ENCODE measurements at regions of chr17 and their contacts with region 1.

Region 1: DNA sequence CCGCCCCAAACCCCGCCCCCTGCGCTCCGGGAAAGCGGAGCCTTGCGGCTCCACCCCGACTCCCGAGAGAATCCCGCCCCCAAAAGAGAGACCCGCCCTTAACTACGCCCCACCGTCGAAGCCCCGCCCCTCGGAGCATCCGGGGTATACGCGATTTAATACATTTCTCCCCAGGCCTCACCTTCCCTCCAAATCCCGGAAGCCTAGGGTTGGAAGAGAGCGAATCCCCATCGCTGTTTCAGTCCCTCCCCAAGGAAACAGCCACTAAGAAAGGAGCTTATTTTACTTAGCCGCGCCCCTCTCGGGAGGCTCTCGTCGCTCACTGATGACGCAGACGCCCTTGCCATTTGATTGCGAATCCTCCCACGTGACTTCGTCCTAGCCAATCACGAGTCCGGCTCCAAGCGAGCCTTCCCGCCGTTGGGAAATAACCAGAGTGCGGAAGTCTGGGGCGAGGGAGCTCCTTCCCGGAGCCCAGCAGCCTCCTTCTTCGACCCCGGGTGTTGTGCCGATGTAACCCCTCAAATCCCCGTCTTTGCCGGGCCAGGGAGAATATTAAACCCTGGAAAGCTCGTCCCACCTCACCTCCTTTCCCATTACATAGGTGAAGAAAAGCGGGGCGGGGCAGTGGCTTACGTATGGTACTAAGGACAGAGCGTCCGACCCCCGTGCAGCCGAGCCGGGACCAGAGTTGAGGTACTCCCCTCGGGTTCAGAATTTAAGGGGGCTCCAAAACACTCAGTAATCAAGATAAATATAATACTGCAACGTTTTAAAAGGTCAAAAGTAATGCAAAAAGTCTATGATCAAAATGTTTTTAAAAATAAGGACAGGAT is 462 bp upstream of the FDXR start:
- DNase-seq: peak; percentile 99 to 100
- H3K4me3 ChIP-seq: peak overlapping the region; percentile 83
- H3K4me3 Mint-ChIP-seq: peak overlapping the region; percentile 84
- H3K27ac Mint-ChIP-seq: peak overlapping the region; percentile 55
- H3K4me1 ChIP-seq: peaks cover 12% of the 10 kb centered on the region
- H3K4me1 Mint-ChIP-seq: peaks cover 21% of the 10 kb centered on the region
- H3K27me3 ChIP-seq: no peaks in the 10 kb centered on the region
- H3K27me3 Mint-ChIP-seq: no peaks in the 10 kb centered on the region
- CTCF ChIP-seq: no peak

Region 2: DNA sequence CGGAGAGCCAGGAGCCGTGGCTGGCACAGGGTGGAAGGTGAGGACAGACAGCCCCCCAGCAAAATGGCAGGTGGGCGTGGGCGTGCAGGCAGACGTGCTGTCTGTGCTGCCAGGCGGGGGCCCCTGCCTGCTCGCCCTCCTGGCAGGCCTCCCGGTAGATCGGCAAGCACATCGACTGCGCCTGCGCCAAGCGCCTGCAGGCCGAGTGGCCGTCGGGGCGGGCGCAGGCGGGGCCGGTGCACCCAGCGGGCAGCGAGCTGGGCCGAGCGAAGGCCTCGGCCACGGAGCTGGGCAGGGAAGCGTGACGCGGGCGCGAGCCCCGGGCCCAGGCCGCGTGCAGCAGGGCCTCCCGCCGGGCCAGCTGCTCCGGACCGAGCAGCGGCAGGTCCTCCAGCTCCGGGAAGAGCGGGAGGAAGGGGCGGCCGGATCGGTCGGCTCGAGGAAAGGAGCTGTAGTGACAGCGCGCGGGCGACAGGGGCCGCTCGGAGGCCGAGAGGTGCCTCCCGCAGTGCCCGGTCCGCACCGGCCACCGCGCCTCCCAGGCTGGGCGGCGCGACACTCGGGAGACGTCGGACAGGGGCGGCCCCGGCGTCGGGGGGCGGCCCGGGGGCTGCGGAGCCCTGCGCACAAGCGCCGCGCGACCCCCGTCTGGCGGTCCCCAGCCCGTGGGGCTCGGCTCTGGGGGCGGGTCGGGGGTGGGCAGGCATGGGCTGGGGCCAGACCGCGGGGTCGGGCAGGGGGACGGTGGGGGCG is 30.5 kb before region 1 on chr17:
- CTCF ChIA-PET with region 1: interaction called, 16 read pairs
- POLR2A ChIA-PET with region 1: interaction called, 14 read pairs
- intact Hi-C with region 1: no loop called
- DNase-seq: peak in 1 of 2 experiments; percentile 81
- H3K4me3 ChIP-seq: peak overlapping the region; percentile 35
- H3K4me3 Mint-ChIP-seq: peak overlapping the region; percentile 39
- H3K27ac Mint-ChIP-seq: no peak overlapping the region
- H3K4me1 ChIP-seq: no peaks in the 10 kb centered on the region
- H3K4me1 Mint-ChIP-seq: no peaks in the 10 kb centered on the region
- H3K27me3 ChIP-seq: no peaks in the 10 kb centered on the region
- H3K27me3 Mint-ChIP-seq: no peaks in the 10 kb centered on the region
- CTCF ChIP-seq: peak; percentile 62 to 69

Region 3: GRCh38 chr17:74907012-74907411 is 33.8 kb after region 1 on chr17:
- CTCF ChIA-PET with region 1: interaction called, 3 read pairs
- POLR2A ChIA-PET with region 1: interaction called, 16 read pairs
- intact Hi-C with region 1: no loop called
- DNase-seq: no peak
- H3K4me3 ChIP-seq: no peak overlapping the region
- H3K4me3 Mint-ChIP-seq: no peak overlapping the region
- H3K27ac Mint-ChIP-seq: no peak overlapping the region
- H3K4me1 ChIP-seq: peaks cover 30% of the 10 kb centered on the region
- H3K4me1 Mint-ChIP-seq: peaks cover 20% of the 10 kb centered on the region
- H3K27me3 ChIP-seq: no peaks in the 10 kb centered on the region
- H3K27me3 Mint-ChIP-seq: no peaks in the 10 kb centered on the region
- CTCF ChIP-seq: no peak

Region 4: GRCh38 chr17:74981979-74982662 is 108.9 kb after region 1 on chr17:
- CTCF ChIA-PET with region 1: interaction called, 4 read pairs
- POLR2A ChIA-PET with region 1: interaction called, 13 read pairs
- intact Hi-C with region 1: no loop called
- DNase-seq: peak; percentile 89 to 93
- H3K4me3 ChIP-seq: peak overlapping the region; percentile 58
- H3K4me3 Mint-ChIP-seq: peak overlapping the region; percentile 95
- H3K27ac Mint-ChIP-seq: peak overlapping the region; percentile 88
- H3K4me1 ChIP-seq: peaks cover 13% of the 10 kb centered on the region
- H3K4me1 Mint-ChIP-seq: peaks cover 7% of the 10 kb centered on the region
- H3K27me3 ChIP-seq: no peaks in the 10 kb centered on the region
- H3K27me3 Mint-ChIP-seq: no peaks in the 10 kb centered on the region
- CTCF ChIP-seq: no peak

Region 5: DNA sequence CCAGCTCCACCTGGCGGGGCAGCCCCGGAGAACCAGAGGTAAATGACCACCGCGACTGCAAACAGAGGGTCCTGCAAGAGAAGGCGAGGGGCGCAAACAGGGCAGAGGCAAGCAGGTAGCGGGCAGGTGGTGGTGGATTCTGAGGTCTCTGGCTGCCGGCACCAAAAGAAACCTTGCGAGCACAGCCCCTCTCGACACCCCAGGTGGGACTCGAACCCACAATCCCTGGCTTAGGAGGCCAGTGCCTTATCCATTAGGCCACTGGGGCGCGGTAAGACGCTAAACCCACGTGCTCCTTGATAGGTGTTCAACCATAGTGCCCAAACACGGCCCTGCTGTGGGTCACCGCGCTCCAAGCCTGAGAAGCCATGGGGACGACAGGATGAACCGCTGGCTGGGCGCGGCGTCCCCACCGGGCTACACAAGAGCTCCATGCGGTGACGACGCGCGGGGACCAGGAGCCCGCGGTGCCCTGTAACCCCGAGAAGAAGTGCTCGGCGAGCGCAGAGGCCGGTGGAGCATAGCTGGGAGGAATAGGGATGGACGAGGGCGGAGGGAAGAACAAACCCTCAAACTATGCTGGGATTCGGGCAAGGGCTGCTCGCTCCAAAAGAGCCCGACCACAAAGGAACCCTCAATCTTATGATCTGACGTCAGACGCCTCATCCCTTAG is 161.1 kb after region 1 on chr17:
- CTCF ChIA-PET with region 1: interaction called, 3 read pairs
- POLR2A ChIA-PET with region 1: interaction called, 11 read pairs
- intact Hi-C with region 1: no loop called
- DNase-seq: peak; percentile 95 to 96
- H3K4me3 ChIP-seq: peak overlapping the region; percentile 91
- H3K4me3 Mint-ChIP-seq: peak overlapping the region; percentile 94
- H3K27ac Mint-ChIP-seq: peak overlapping the region; percentile 98
- H3K4me1 ChIP-seq: no peaks in the 10 kb centered on the region
- H3K4me1 Mint-ChIP-seq: peaks cover 30% of the 10 kb centered on the region
- H3K27me3 ChIP-seq: no peaks in the 10 kb centered on the region
- H3K27me3 Mint-ChIP-seq: peaks cover 4% of the 10 kb centered on the region
- CTCF ChIP-seq: peak; percentile 14 to 17